Caco-2 (cell line): ENCODE measurements at regions of chr20 and their contacts with region 1.

Region 1: GRCh38 chr20:58388882-58389323 is at the start of gene VAPB:
- DNase-seq: peak; percentile 98 to 100
- H3K4me3 ChIP-seq: peak within 1 kb of the TSS; percentile 74
- H3K4me3 Mint-ChIP-seq: peak within 1 kb of the TSS; percentile 86
- H3K27ac Mint-ChIP-seq: peak within 1 kb of the TSS; percentile 88
- H3K4me1 ChIP-seq: peaks cover 22% of the 10 kb centered on the region
- H3K4me1 Mint-ChIP-seq: peaks cover 36% of the 10 kb centered on the region
- H3K27me3 ChIP-seq: no peaks in the 10 kb centered on the region
- H3K27me3 Mint-ChIP-seq: no peaks in the 10 kb centered on the region
- CTCF ChIP-seq: no peak
- total RNA-seq, gene VAPB: 182 and 186 TPM in 2 replicates

Region 2: GRCh38 chr20:58309575-58310290 is 79.2 kb before region 1 on chr20 and contains the start of gene RAB22A:
- CTCF ChIA-PET with region 1: interaction called, 4 read pairs
- POLR2A ChIA-PET with region 1: interaction called, 8 read pairs
- intact Hi-C with region 1: loop called (anchors 5 kb)
- DNase-seq: peak; percentile 81 to 93
- H3K4me3 ChIP-seq: peak within 1 kb of the TSS; percentile 94
- H3K4me3 Mint-ChIP-seq: peak within 1 kb of the TSS; percentile 97
- H3K27ac Mint-ChIP-seq: peak within 1 kb of the TSS; percentile 92
- H3K4me1 ChIP-seq: peaks cover 13% of the 10 kb centered on the region; the same call in 1 of the 2 replicates
- H3K4me1 Mint-ChIP-seq: peaks cover 14% of the 10 kb centered on the region
- H3K27me3 ChIP-seq: no peaks in the 10 kb centered on the region
- H3K27me3 Mint-ChIP-seq: no peaks in the 10 kb centered on the region
- CTCF ChIP-seq: no peak
- total RNA-seq, gene RAB22A: 24.1 and 25.7 TPM in 2 replicates